H1 (cell line): ENCODE measurements at regions of chr4 and their contacts with region 1.

Region 1: GRCh38 chr4:4317496-4318232 is 27.6 kb downstream of the ZBTB49 start:
- DNase-seq: no peak
- H3K4me3 ChIP-seq: no peak overlapping the region
- H3K27ac ChIP-seq: no peak overlapping the region
- H3K4me1 ChIP-seq: peaks cover 0 to 7% (median 2%) of the 10 kb centered on the region in 4 experiments; a peak in 3 of 7 replicates
- H3K27me3 ChIP-seq: no peaks in the 10 kb centered on the region
- CTCF ChIP-seq: no peak
- EP300 ChIP-seq: no peak
- POLR2A ChIP-seq: no peak
- RAD21 ChIP-seq: no peak

Region 2: DNA sequence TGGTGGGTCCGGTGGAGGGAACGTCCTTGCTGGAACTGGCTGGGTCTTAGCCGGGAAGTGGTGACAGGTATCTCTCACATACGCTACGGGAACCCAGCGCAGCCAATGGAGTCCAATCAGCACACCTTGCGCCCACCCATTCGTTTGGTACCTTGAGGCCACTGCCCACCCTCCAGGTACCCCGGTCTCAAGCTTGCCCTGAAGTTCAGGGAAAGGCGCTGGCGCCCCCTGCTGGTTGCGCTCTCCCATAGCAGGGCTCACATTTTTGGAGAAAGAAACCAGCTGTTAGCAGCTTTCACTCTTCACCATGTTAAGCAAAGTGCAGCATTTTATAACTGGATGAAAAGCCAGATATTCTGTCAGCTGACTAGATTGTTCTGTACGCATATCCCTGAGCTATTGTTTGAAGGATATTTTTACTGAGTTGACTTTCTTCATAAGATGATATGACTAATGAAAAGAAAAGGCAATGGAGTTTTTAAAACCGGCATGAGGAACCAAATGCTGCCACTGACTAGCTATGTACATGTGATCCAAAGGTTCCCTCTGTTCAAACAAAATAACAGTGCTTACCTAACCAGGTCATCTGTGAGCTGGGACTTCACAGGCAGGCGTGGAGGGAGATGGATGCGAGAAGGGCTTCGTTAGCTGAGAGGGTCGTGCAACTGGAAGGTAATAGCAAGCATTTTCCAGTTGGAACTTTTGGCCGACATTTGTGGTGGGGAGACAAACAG is 134.7 kb before region 1 on chr4:
- CTCF ChIA-PET with region 1: no interaction called
- POLR2A ChIA-PET with region 1: no interaction called
- DNase-seq: peak; percentile 39 to 88
- H3K4me3 ChIP-seq: no peak overlapping the region
- H3K27ac ChIP-seq: no peak overlapping the region
- H3K4me1 ChIP-seq: peaks cover 0 to 2% (median 0%) of the 10 kb centered on the region in 4 experiments; a peak in 1 of 7 replicates
- H3K27me3 ChIP-seq: no peaks in the 10 kb centered on the region
- CTCF ChIP-seq: peak; percentile 85 to 90 (median 87)
- EP300 ChIP-seq: no peak
- POLR2A ChIP-seq: no peak
- RAD21 ChIP-seq: peak; percentile 87 to 91

Region 3: DNA sequence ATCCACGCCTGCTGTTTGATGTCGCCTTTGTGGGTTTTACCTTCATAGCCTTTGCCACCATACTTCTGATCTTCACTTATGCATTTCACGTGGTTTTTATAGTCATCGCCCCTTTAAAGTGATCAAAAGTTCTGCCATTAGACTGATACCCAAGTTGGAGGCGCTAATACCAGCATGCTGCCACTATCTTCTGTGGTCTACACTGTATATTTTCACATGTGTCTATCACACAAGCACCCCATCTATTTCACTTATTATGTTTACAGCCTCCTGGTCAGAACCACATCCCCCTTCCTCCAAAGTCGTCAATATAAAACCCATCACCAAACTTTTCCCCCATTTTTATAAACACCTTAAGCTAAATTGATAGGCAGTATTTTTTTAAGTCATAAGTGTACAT is 35.9 kb before region 1 on chr4:
- CTCF ChIA-PET with region 1: no interaction called
- POLR2A ChIA-PET with region 1: no interaction called
- DNase-seq: no peak
- H3K4me3 ChIP-seq: no peak overlapping the region
- H3K27ac ChIP-seq: no peak overlapping the region
- H3K4me1 ChIP-seq: no peaks in the 10 kb centered on the region
- H3K27me3 ChIP-seq: no peaks in the 10 kb centered on the region
- CTCF ChIP-seq: no peak
- EP300 ChIP-seq: no peak
- POLR2A ChIP-seq: no peak
- RAD21 ChIP-seq: no peak

Region 4: GRCh38 chr4:4327652-4328121 is 10.0 kb after region 1 on chr4:
- CTCF ChIA-PET with region 1: interaction called, 11 read pairs
- POLR2A ChIA-PET with region 1: no interaction called
- DNase-seq: peak; percentile 50 to 86
- H3K4me3 ChIP-seq: peak overlapping the region in 1 of 4 experiments; percentile 23; a peak in 1 of 8 replicates
- H3K27ac ChIP-seq: no peak overlapping the region
- H3K4me1 ChIP-seq: peaks cover 0 to 6% (median 1%) of the 10 kb centered on the region in 4 experiments; a peak in 2 of 7 replicates
- H3K27me3 ChIP-seq: no peaks in the 10 kb centered on the region
- CTCF ChIP-seq: peak; percentile 88 to 90 (median 88)
- EP300 ChIP-seq: no peak
- POLR2A ChIP-seq: no peak
- RAD21 ChIP-seq: peak; percentile 46 to 53; a peak in 3 of 4 replicates